ENCODE measurements at regions of chr17 and their contacts with region 1.

Region 1: DNA sequence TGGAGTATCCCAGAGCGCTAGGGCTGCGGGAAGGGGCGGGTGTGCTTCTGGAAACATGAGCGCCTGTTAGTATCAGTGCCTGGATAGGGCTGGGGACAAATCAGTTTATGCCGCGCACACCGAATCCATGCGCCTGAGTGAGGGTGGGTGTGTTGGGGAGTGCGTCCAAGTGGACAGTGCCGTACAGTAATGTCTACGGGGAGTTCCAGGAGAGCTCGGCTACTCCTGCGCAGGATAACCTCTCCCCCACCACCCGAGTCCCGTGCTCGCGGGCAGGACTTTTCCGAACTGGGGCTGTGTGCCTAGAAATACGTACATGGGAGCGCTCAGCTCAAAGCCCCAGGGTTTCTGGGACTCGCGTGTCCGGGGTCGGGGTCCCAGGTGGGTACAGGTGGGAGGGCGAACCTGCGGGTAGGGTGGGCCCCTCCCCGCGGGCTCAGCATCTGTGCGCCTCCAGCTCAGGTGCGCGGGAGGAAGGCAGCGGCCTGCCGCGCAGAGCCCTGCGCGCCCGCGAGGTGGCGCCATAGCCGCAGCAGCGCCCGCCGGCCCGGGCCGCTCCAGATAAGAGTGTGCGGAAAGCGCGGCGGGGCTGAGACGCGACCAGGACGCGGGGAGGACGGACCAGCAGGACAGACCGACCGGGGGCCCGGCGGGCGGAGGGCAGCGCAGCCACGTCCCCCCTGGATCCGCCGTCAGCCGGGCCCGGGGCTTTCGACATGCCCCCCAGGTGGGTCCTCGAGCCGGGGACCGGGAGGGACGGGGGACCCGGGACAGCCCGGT is at the start of gene HIC1:
- DNase-seq: no peak
- H3K4me3 ChIP-seq: peak within 1 kb of the TSS; percentile 79
- H3K27me3 ChIP-seq: no peaks in the 10 kb centered on the region
- CTCF ChIP-seq: peak; percentile 50
- polyA plus RNA-seq, gene HIC1: 14.8 and 15.1 TPM in 2 replicates

Region 2: GRCh38 chr17:1931759-1932579 is 122.7 kb before region 1 on chr17:
- CTCF ChIA-PET with region 1: no interaction called
- POLR2A ChIA-PET with region 1: no interaction called
- DNase-seq: no peak
- H3K4me3 ChIP-seq: no peak overlapping the region
- H3K27me3 ChIP-seq: peaks cover 2% of the 10 kb centered on the region; the same call in 1 of the 2 replicates
- CTCF ChIP-seq: no peak

Region 3: GRCh38 chr17:2064980-2065785 is 10.5 kb after region 1 on chr17:
- CTCF ChIA-PET with region 1: interaction called, 33 read pairs
- POLR2A ChIA-PET with region 1: no interaction called
- DNase-seq: no peak
- H3K4me3 ChIP-seq: no peak overlapping the region
- H3K27me3 ChIP-seq: no peaks in the 10 kb centered on the region
- CTCF ChIP-seq: peak; percentile 65

Region 4: GRCh38 chr17:2087597-2088211 is 33.0 kb after region 1 on chr17:
- CTCF ChIA-PET with region 1: interaction called, 41 read pairs
- POLR2A ChIA-PET with region 1: no interaction called
- DNase-seq: no peak
- H3K4me3 ChIP-seq: no peak overlapping the region
- H3K27me3 ChIP-seq: no peaks in the 10 kb centered on the region
- CTCF ChIP-seq: no peak

Region 5: GRCh38 chr17:2222901-2223616 is 168.4 kb after region 1 on chr17:
- CTCF ChIA-PET with region 1: interaction called, 20 read pairs
- POLR2A ChIA-PET with region 1: no interaction called
- DNase-seq: no peak
- H3K4me3 ChIP-seq: no peak overlapping the region
- H3K27me3 ChIP-seq: no peaks in the 10 kb centered on the region
- CTCF ChIP-seq: no peak

Region 6: GRCh38 chr17:2259769-2260536 is 205.3 kb after region 1 on chr17:
- CTCF ChIA-PET with region 1: interaction called, 19 read pairs
- POLR2A ChIA-PET with region 1: interaction called, 5 read pairs
- DNase-seq: no peak
- H3K4me3 ChIP-seq: no peak overlapping the region
- H3K27me3 ChIP-seq: no peaks in the 10 kb centered on the region
- CTCF ChIP-seq: no peak

Region 7: DNA sequence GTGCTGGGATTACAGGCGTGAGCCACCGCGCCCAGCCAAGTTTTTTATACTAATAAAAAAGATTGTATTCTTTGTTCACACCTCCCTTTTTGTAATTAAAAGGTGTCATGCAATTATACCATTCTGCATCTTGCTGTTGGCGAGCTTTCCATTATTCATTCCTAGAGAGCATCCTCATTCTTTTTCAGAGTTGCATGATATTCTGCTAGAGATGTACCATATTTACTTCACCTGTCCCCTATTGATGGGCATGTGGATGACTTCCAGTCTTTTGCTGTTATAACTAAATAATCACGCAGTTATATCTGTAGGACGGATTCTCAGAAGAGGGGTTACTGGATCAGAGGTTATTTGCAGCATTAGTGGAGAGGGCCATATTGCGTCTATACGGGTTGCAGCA is 299.6 kb after region 1 on chr17:
- CTCF ChIA-PET with region 1: interaction called, 13 read pairs
- POLR2A ChIA-PET with region 1: no interaction called
- DNase-seq: no peak
- H3K4me3 ChIP-seq: no peak overlapping the region
- H3K27me3 ChIP-seq: no peaks in the 10 kb centered on the region
- CTCF ChIP-seq: no peak